CD4-positive, alpha-beta memory T cell (primary cell): ENCODE measurements at regions of chr1 and their contacts with region 1.

Region 1: GRCh38 chr1:9651565-9652378 is at the start of gene PIK3CD:
- DNase-seq: peak in 3 of 5 donors; percentile 34 to 59 (median 36)
- H3K4me3 ChIP-seq: peak within 1 kb of the TSS; percentile 84 to 96
- H3K4me3 Mint-ChIP-seq: peak within 1 kb of the TSS; percentile 100
- H3K27ac ChIP-seq: peak within 1 kb of the TSS; percentile 71
- H3K27ac Mint-ChIP-seq: peak within 1 kb of the TSS; percentile 97 to 100 (median 98)
- H3K4me1 ChIP-seq: peaks cover 46% of the 10 kb centered on the region
- H3K4me1 Mint-ChIP-seq: peaks cover 23 to 65% (median 45%) of the 10 kb centered on the region in 4 donors
- H3K27me3 ChIP-seq: no peaks in the 10 kb centered on the region
- H3K27me3 Mint-ChIP-seq: no peaks in the 10 kb centered on the region
- total RNA-seq, gene PIK3CD: 220 to 236 TPM

Region 2: DNA sequence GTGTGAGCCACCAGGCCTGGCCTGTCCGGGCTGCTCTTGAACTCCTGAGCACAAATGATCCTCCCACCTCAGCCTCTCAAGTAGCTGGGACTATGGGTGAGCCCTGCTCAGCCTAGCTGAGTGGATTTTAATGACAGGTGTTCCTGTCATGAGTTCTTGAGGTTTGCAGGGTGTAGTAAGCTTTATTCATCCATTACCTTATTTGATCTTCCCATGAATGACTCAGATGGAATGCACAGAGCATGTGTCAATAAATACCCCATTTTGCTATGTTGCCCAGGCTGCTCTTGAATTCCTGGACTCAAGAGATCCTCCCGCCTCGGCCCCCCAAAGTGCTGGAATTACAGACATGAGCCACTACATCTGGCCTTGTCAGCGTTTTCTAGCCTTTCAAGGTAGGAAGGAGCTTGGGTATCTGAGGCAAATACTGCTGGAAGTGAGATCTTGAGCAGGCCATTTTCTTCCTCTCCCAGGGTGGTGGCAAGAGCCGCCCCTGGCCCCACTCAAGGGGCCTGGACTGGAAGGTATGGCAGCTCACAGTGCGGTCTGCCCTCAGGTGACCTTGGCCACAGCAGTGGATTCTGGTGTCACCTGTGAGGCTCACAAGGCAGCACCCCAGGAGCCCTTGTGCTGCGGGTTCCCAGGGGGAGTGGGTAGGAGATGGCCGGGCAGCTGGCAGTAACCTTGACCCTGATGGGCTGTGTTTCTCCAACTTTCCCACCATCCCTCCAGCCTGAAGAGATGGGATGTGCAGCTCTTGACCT is 19.8 kb after region 1 on chr1:
- CTCF ChIA-PET with region 1: interaction called, 4 read pairs
- POLR2A ChIA-PET with region 1: interaction called, 89 read pairs
- intact Hi-C with region 1: no loop called
- DNase-seq: no peak
- H3K4me3 ChIP-seq: no peak overlapping the region
- H3K4me3 Mint-ChIP-seq: peak overlapping the region in 2 of 8 donors; percentile 20 to 61
- H3K27ac ChIP-seq: peak overlapping the region; percentile 2
- H3K27ac Mint-ChIP-seq: peak overlapping the region; percentile 6 to 90 (median 75)
- H3K4me1 ChIP-seq: peaks cover 62% of the 10 kb centered on the region
- H3K4me1 Mint-ChIP-seq: peaks cover 29 to 68% (median 50%) of the 10 kb centered on the region in 4 donors
- H3K27me3 ChIP-seq: no peaks in the 10 kb centered on the region
- H3K27me3 Mint-ChIP-seq: no peaks in the 10 kb centered on the region

Region 3: DNA sequence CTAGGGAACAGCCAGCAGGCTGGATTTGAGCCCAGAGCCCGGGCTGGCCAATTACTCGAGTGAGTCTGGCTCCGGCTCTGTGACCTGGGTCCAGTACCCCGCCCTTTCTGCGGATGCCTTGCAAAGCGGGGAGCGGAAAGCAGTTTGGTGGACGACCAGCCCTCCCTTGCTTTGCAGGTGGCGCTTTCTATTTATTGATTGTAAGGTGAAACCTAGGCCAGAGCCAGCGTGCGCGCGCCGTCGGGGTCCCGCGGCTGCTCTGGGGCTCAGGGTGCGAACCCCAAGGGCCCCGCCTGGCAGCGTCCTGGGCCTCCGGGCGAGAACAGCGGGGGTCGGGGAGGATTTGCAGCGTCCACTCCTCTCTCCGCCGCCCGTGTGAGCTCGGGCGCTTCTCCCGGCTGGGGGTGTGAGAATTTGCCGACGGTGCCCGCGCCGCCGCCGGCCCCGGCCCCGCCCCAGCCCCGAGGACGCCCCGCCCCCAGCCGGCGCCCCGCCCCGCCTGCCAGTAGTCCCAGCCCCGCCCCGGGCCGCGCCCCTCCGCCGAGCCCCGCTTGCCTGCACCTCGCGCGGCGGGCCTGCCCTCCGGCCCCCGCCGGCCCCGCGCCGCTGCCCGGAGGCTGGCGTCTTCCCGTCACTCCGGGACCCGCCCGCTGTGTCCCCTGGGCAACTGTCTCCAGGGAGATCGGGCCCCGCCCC is 37.4 kb after region 1 on chr1:
- CTCF ChIA-PET with region 1: interaction called, 4 read pairs
- POLR2A ChIA-PET with region 1: interaction called, 155 read pairs
- intact Hi-C with region 1: loop called (anchors 2 kb)
- DNase-seq: peak; percentile 75 to 80 (median 78)
- H3K4me3 ChIP-seq: peak overlapping the region; percentile 57 to 63
- H3K4me3 Mint-ChIP-seq: peak overlapping the region; percentile 61 to 89 (median 78)
- H3K27ac ChIP-seq: peak overlapping the region; percentile 37
- H3K27ac Mint-ChIP-seq: peak overlapping the region in 4 of 7 donors; percentile 46 to 85 (median 52)
- H3K4me1 ChIP-seq: peaks cover 77% of the 10 kb centered on the region
- H3K4me1 Mint-ChIP-seq: peaks cover 38 to 80% (median 60%) of the 10 kb centered on the region in 4 donors
- H3K27me3 ChIP-seq: no peaks in the 10 kb centered on the region
- H3K27me3 Mint-ChIP-seq: no peaks in the 10 kb centered on the region

Region 4: DNA sequence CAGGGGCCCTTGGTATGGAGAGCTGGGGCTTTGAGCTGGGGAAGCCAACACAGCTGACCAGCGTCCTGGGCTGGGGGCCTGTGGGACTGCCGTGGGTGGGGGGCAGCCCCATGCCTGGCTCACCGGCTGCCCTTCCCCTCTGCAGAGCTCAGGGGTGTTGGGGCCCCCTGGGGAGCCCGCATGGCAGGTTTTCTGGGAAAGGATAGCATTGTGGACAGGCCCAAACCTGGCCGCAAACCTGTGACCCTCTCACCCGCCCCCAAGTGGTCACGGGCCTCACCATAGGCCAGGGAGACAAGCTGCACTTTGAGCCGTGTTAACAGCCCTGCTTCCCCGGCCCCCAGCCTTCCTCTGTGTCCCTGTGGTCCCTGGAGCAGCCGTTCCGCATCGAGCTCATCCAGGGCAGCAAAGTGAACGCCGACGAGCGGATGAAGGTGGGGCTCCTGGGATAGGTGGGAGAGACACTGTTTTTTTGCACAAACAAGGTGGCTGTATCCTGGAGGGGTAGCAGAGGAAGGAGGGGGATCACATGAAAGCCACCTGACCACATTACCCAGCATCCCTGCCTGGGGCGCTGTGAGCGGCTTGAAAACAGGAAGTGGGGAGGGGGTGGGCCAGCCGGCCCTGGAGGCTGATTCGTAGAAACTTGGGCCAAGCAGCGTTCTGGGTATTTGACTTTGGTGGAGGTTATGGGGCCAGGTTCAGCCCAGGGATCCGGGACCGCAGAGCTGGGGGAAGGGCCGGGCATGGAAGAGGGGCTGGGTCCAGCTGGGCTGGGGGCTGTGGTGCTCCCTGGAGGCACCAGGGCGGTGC is 65.6 kb after region 1 on chr1:
- CTCF ChIA-PET with region 1: interaction called, 35 read pairs
- POLR2A ChIA-PET with region 1: interaction called, 307 read pairs
- intact Hi-C with region 1: loop called (anchors 2 kb)
- DNase-seq: peak; percentile 90 to 95 (median 91)
- H3K4me3 ChIP-seq: peak overlapping the region; percentile 66 to 82
- H3K4me3 Mint-ChIP-seq: peak overlapping the region; percentile 91 to 96 (median 94)
- H3K27ac ChIP-seq: peak overlapping the region; percentile 58
- H3K27ac Mint-ChIP-seq: peak overlapping the region; percentile 92 to 97 (median 93)
- H3K4me1 ChIP-seq: peaks cover 96% of the 10 kb centered on the region
- H3K4me1 Mint-ChIP-seq: peaks cover 18 to 84% (median 56%) of the 10 kb centered on the region in 4 donors
- H3K27me3 ChIP-seq: no peaks in the 10 kb centered on the region
- H3K27me3 Mint-ChIP-seq: no peaks in the 10 kb centered on the region

Region 5: DNA sequence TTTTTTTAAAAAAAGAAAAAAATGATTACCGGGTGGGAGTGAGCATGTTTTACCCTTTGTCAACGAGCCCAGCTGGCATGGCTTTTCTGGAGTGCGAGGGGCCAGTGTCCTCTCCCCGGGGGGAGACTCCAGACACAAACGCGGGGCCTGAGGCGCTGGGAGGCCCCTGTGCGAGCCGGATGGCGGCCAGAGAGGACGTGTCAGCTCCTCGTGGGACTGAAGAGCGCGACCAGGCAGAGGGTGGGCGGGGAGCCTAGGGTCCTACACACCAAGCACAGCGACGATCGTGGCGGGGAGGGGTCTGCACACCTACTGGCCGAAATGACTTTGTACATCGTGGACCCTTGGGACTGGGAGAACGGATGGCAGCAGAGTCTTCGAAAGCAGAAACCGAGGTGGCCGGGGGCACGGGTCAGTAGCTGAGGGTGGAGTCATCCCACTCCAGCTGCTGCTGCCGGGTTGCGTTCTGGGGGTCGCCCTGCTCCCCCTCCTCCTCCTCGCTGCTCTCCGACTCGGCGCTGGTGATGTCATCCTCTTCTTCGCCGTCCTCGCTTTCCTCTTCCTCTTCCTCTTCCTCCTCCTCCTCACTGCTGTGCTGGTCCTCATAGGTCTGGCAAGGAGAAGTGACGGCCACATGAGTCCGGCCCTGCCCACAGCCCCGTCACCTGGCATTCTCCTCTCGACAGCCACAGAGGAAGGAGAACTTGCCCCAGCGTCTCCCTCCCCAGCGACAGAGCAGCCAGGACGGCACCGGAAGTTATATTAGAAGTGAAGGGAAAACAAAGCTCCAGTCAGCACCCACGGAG is 78.5 kb after region 1 on chr1:
- CTCF ChIA-PET with region 1: interaction called, 5 read pairs
- POLR2A ChIA-PET with region 1: interaction called, 32 read pairs
- intact Hi-C with region 1: loop called (anchors 2 kb)
- DNase-seq: no peak
- H3K4me3 ChIP-seq: no peak overlapping the region
- H3K4me3 Mint-ChIP-seq: peak overlapping the region in 7 of 8 donors; percentile 22 to 71 (median 49)
- H3K27ac ChIP-seq: no peak overlapping the region
- H3K27ac Mint-ChIP-seq: peak overlapping the region; percentile 68 to 93 (median 90)
- H3K4me1 ChIP-seq: peaks cover 41% of the 10 kb centered on the region
- H3K4me1 Mint-ChIP-seq: peaks cover 23 to 68% (median 49%) of the 10 kb centered on the region in 4 donors
- H3K27me3 ChIP-seq: no peaks in the 10 kb centered on the region
- H3K27me3 Mint-ChIP-seq: no peaks in the 10 kb centered on the region